ENCODE measurements at regions of chr2 and their contacts with region 1.

Region 1: DNA sequence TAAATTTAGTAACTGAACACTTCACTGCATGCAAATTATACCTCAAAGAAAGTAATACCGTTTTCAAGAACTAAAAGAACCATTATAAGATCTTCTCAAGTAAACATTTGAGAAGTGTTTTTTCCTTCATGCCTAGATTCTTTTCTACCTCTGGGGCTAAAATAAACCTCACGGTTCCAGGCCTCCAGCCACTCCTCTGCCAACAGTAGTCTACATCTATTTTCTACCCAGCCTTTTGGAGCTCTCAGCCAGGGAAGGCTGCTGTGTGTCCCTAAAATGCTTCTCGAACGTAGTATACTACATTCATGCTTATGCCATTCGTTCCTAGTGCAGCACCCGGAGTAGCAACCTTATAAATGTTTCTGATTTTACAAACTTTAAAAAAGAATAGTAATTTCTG is 219.7 kb downstream of the AFF3 start:
- DNase-seq: no peak
- ATAC-seq: peak; percentile 63

Region 2: GRCh38 chr2:99670768-99671734 is 251.6 kb before region 1 on chr2:
- intact Hi-C with region 1: no loop called
- DNase-seq: no peak
- ATAC-seq: peak; percentile 45

Region 3: DNA sequence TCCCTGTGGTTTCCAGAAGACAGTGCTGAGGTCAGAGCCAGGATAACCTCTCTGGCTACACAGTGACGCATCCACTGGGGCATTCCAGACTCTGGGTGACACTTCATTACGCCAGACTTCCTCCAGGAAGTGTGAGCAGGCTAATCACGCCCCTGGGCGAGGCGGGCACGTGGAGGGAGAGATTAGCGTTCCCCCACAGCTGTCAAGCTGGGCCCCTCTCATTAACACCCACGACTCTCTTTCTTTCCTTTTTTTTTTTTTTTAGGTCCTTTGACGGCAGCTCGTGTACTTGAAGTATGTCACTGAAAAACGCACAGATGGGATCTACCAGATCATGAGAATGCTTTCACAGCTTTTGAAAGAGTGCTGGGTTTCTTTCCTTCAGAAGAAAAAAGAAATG is 54.9 kb before region 1 on chr2:
- intact Hi-C with region 1: loop called (anchors 2 kb)
- DNase-seq: no peak
- ATAC-seq: no peak

Measured in Right ventricle myocardium inferior (tissue), 1 donor.